Ovary (tissue), 10 donors: ENCODE measurements at regions of chr5 and their contacts with region 1.

Region 1: DNA sequence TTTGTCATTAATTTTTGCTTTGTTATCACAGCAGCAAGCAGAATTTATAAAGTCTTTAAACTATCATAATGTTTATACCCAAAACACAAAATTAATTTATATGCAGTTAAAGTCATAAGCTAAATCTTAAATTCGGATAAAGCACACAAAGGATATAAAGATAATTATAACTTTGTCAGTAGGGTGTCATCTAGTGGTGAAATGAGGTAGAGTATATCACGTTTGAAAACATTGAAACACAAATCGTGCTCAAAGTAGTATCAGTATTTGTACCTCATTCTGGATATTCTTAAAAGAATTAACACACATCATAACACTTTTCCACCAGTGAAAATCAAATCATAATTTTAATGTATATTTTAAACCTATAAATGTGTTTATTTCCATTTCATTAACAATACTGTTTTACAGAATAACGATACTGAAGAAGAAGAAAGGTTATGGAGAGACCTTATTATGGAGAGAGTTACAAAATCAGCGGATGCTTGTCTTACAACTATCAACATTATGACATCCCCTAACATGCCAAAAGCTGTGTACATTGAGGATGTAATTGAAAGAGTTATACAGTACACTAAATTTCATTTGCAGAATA is 129.5 kb downstream of the NIPBL start:
- DNase-seq: no peak
- H3K4me3 ChIP-seq: no peak overlapping the region
- H3K27ac ChIP-seq: no peak overlapping the region
- H3K4me1 ChIP-seq: no peaks in the 10 kb centered on the region
- H3K27me3 ChIP-seq: no peaks in the 10 kb centered on the region
- CTCF ChIP-seq: peak; percentile 28 to 58 (median 31)
- EP300 ChIP-seq: no peak
- POLR2A ChIP-seq: no peak

Region 2: DNA sequence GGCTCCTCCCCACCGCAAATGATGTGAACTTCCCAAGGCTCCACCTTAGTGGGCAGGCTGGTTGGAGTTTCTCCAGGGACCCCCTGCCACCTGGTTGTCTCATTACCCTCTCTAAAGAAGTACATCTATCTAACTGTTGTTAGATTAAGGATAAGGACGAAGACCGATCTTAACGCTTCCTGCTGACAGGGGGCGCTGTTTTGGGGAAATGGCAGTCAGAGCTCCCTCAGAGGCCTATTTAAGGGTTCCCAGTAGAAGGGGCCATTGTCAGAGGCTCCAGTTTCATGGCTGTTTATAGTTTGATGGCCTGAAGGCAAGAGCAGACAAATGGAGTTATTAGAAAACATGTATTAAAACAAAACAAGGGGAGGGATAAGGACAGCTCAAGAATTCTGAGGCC is 1288.3 kb before region 1 on chr5:
- intact Hi-C with region 1: no loop called
- DNase-seq: no peak
- H3K4me3 ChIP-seq: no peak overlapping the region
- H3K27ac ChIP-seq: no peak overlapping the region
- H3K4me1 ChIP-seq: no peaks in the 10 kb centered on the region
- H3K27me3 ChIP-seq: no peaks in the 10 kb centered on the region
- CTCF ChIP-seq: no peak
- EP300 ChIP-seq: no peak
- POLR2A ChIP-seq: no peak

Region 3: DNA sequence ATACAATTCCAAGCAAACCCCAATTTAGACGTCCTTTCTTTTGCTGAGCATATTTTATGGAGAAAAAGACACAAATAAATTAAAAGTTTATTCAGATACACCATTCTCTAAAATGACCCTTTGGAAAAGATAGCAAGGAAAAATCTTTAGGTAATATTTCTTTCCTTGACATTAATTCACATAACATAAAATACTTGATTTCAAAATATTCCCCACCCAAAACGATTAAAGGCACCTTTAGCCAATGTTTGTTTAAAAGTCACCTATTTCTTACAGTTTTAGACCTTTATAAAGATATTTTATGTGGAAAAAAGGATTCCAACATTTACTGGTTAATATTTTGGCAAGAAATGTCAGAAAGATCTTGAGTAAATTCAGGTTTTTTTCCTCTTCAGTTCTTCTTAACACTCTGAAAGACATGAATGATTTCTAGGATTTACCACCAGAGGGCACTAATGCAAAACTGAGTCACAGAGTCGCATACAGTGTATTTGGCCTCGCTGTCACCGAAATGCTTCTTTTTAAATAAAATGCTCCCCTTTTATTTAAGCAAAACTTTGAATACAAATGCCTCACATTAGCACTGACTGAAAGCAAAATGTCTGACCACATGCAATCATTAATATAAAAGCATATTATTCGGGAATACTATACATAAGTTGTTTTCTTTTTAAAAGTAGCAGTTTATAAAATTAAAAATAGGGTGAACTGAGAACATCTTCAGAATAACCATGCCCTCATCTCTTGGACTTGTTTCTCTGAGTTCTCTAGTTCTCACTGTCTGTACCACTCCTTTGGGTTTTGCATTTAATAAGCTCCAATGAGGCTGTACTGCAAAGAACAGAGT is 277.1 kb before region 1 on chr5:
- intact Hi-C with region 1: loop called in 2 of 4 experiments (anchors 5 to 10 kb)
- DNase-seq: no peak
- H3K4me3 ChIP-seq: no peak overlapping the region
- H3K27ac ChIP-seq: no peak overlapping the region
- H3K4me1 ChIP-seq: no peaks in the 10 kb centered on the region
- H3K27me3 ChIP-seq: no peaks in the 10 kb centered on the region
- CTCF ChIP-seq: peak; percentile 38 to 52 (median 40)
- EP300 ChIP-seq: no peak
- POLR2A ChIP-seq: no peak

Region 4: GRCh38 chr5:37034955-37035354 is 28.9 kb after region 1 on chr5:
- intact Hi-C with region 1: no loop called
- DNase-seq: no peak
- H3K4me3 ChIP-seq: no peak overlapping the region
- H3K27ac ChIP-seq: no peak overlapping the region
- H3K4me1 ChIP-seq: no peaks in the 10 kb centered on the region
- H3K27me3 ChIP-seq: no peaks in the 10 kb centered on the region
- CTCF ChIP-seq: no peak
- EP300 ChIP-seq: no peak
- POLR2A ChIP-seq: no peak